Psoas muscle (tissue), 8 donors: ENCODE measurements at regions of chr12 and their contacts with region 1.

Region 1: GRCh38 chr12:123436017-123436964 is at the start of gene RILPL2:
- DNase-seq: peak; percentile 89 to 94
- ATAC-seq: peak; percentile 91 to 97 (median 94)
- H3K4me3 ChIP-seq: peak within 1 kb of the TSS; percentile 84
- H3K27ac ChIP-seq: peak within 1 kb of the TSS; percentile 68
- H3K4me1 ChIP-seq: no peaks in the 10 kb centered on the region
- H3K27me3 ChIP-seq: no peaks in the 10 kb centered on the region
- CTCF ChIP-seq: no peak
- total RNA-seq, gene RILPL2: 0.69 to 1.2 (median 1.1) TPM

Region 2: DNA sequence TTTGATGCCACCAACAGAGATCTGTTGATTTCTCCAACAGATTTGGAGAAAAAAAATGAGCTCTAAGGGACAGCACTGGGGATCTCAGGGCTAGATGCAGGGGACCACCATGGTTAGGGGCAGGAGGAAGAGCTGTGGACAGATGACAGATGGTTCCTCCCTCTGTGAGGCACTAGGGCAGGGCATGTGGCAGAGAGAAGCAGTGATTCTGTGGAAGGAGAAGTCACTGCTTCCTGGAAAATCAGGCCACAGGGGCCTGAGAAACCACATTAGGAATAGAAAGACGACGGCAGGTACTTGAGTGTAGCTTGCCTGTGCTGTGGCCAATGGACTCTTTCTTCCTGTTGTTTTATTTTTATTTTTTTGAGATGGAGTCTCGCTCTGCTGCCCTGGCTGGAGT is 123.2 kb after region 1 on chr12:
- intact Hi-C with region 1: loop called in 1 of 2 experiments (anchors 10 kb)
- DNase-seq: no peak
- ATAC-seq: no peak
- H3K4me3 ChIP-seq: no peak overlapping the region
- H3K27ac ChIP-seq: no peak overlapping the region
- H3K4me1 ChIP-seq: no peaks in the 10 kb centered on the region
- H3K27me3 ChIP-seq: no peaks in the 10 kb centered on the region
- CTCF ChIP-seq: no peak

Region 3: GRCh38 chr12:123891516-123892179 is 455.4 kb after region 1 on chr12:
- intact Hi-C with region 1: no loop called
- DNase-seq: peak in 1 of 2 donors; percentile 27
- ATAC-seq: no peak
- H3K4me3 ChIP-seq: no peak overlapping the region
- H3K27ac ChIP-seq: no peak overlapping the region
- H3K4me1 ChIP-seq: no peaks in the 10 kb centered on the region
- H3K27me3 ChIP-seq: peaks cover 0 to 31% (median 6%) of the 10 kb centered on the region in 3 donors
- CTCF ChIP-seq: no peak

Region 4: GRCh38 chr12:125340791-125341190 is 1904.5 kb after region 1 on chr12:
- intact Hi-C with region 1: no loop called
- DNase-seq: no peak
- ATAC-seq: peak in 1 of 4 donors; percentile 40
- H3K4me3 ChIP-seq: no peak overlapping the region
- H3K27ac ChIP-seq: no peak overlapping the region
- H3K4me1 ChIP-seq: no peaks in the 10 kb centered on the region
- H3K27me3 ChIP-seq: peaks cover 0 to 2% (median 0%) of the 10 kb centered on the region in 3 donors
- CTCF ChIP-seq: no peak